Aorta (tissue), 5 donors: ENCODE measurements at regions of chr20 and their contacts with region 1.

Region 1: GRCh38 chr20:57391074-57391554 is at the start of gene RBM38:
- DNase-seq: peak; percentile 65 to 88
- ATAC-seq: peak; percentile 82
- H3K4me3 ChIP-seq: peak within 1 kb of the TSS; percentile 72 to 87
- H3K27ac ChIP-seq: peak within 1 kb of the TSS in 1 of 2 donors; percentile 43
- H3K4me1 ChIP-seq: peaks cover 0 to under 1% of the 10 kb centered on the region in 2 donors
- H3K27me3 ChIP-seq: no peaks in the 10 kb centered on the region
- total RNA-seq, gene RBM38: 19.3 to 20.7 TPM

Region 2: DNA sequence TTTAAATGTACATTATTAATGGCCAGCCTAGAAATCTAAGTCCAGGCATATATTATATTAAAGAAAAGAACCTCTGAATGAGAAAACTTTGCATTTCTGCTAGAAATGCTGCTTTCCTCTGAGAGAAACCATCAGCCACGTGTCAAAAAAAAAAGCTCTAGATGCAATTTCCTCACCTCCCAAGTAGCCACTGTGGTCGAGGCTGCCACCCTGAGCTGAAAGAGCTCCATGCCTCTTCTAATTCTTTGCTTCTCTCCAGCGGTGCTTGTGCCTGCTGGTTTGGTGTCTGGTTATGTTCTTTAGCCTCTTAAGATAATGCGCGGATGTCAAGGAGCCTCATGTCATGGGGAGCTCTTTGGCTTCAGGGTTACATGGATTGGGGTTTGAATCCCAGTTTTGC is 446.1 kb before region 1 on chr20:
- intact Hi-C with region 1: no loop called
- DNase-seq: no peak
- ATAC-seq: no peak
- H3K4me3 ChIP-seq: no peak overlapping the region
- H3K27ac ChIP-seq: no peak overlapping the region
- H3K4me1 ChIP-seq: no peaks in the 10 kb centered on the region
- H3K27me3 ChIP-seq: no peaks in the 10 kb centered on the region

Region 3: GRCh38 chr20:57231951-57232428 is 159.1 kb before region 1 on chr20:
- intact Hi-C with region 1: no loop called
- DNase-seq: no peak
- ATAC-seq: no peak
- H3K4me3 ChIP-seq: no peak overlapping the region
- H3K27ac ChIP-seq: no peak overlapping the region
- H3K4me1 ChIP-seq: no peaks in the 10 kb centered on the region
- H3K27me3 ChIP-seq: no peaks in the 10 kb centered on the region

Region 4: GRCh38 chr20:57435498-57436222 is 44.5 kb after region 1 on chr20:
- intact Hi-C with region 1: loop called (anchors 2 to 5 kb)
- DNase-seq: peak; percentile 80 to 85
- ATAC-seq: no peak
- H3K4me3 ChIP-seq: no peak overlapping the region
- H3K27ac ChIP-seq: no peak overlapping the region
- H3K4me1 ChIP-seq: peaks cover 0 to 2% of the 10 kb centered on the region in 2 donors
- H3K27me3 ChIP-seq: no peaks in the 10 kb centered on the region

Region 5: GRCh38 chr20:57440678-57441520 is 49.8 kb after region 1 on chr20:
- intact Hi-C with region 1: loop called (anchors 2 to 5 kb)
- DNase-seq: peak; percentile 94
- ATAC-seq: peak; percentile 91
- H3K4me3 ChIP-seq: no peak overlapping the region
- H3K27ac ChIP-seq: peak overlapping the region; percentile 64 to 95
- H3K4me1 ChIP-seq: peaks cover 0 to 3% of the 10 kb centered on the region in 2 donors
- H3K27me3 ChIP-seq: no peaks in the 10 kb centered on the region

Region 6: DNA sequence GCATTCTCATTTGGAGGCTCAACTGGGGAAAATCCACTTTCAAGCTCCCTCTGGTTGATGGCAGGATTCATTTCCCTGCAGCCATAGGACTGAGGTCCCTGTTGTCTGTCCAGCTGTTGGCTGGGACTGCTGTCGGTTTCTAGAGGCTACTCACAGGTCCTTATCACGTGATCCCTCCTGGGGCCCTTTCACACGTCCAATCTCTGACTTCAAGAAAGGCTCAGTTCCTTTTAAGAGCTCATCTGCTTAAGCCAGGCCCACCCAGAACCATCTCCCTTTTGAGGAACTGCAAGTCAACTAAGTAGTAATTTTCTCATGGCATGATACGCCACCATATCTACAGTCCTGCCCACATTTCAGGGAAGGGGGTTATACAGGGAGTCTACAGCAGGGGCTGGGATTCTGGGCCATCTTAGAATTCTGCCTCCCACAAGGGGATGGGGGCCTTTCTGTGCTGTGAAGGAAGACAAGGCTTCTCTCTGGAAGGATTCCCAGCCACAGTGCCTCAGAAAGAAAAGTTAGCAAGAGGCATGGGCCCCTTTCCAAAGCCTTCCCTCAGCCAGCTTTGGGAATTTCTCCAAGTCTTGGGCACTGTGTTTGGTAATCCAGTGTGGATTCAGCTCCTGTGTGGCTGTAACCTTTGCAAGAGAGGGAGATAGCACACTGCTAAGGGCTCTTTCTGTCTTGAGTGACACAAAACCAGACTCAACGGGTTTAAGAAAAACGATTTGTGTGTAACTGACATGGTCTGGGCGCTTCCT is 67.5 kb after region 1 on chr20:
- intact Hi-C with region 1: loop called in 1 of 2 experiments (anchors 2 kb)
- DNase-seq: no peak
- ATAC-seq: peak; percentile 31
- H3K4me3 ChIP-seq: no peak overlapping the region
- H3K27ac ChIP-seq: no peak overlapping the region
- H3K4me1 ChIP-seq: no peaks in the 10 kb centered on the region
- H3K27me3 ChIP-seq: no peaks in the 10 kb centered on the region

Region 7: GRCh38 chr20:57480444-57481160 is 89.5 kb after region 1 on chr20:
- intact Hi-C with region 1: no loop called
- DNase-seq: no peak
- ATAC-seq: no peak
- H3K4me3 ChIP-seq: no peak overlapping the region
- H3K27ac ChIP-seq: no peak overlapping the region
- H3K4me1 ChIP-seq: no peaks in the 10 kb centered on the region
- H3K27me3 ChIP-seq: no peaks in the 10 kb centered on the region

Region 8: GRCh38 chr20:58014628-58015315 is 623.7 kb after region 1 on chr20:
- intact Hi-C with region 1: no loop called
- DNase-seq: no peak
- ATAC-seq: no peak
- H3K4me3 ChIP-seq: no peak overlapping the region
- H3K27ac ChIP-seq: no peak overlapping the region
- H3K4me1 ChIP-seq: no peaks in the 10 kb centered on the region
- H3K27me3 ChIP-seq: no peaks in the 10 kb centered on the region